ENCODE measurements at regions of chr11 and their contacts with region 1.

Region 1: DNA sequence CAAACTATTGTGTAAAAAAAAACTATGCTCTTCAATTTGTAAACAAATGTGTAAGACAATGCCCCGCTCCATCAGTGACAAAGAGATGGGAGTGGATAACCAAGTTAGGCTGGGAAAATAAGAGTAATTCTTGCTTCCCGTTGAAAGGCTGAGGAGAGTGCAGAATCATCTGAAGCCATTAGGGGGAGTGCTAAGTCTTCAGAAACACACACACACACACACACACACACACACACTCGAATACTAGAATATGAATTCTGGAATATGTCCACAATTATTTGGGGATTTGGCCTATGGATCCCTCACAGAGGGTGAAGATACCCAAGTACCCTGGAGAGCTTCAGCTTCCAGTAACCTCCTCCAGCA is 27.8 kb upstream of the ROBO3 start:
- DNase-seq: peak; percentile 87
- H3K4me3 ChIP-seq: no peak overlapping the region
- H3K27ac ChIP-seq: no peak overlapping the region
- H3K4me1 ChIP-seq: peaks cover 10% of the 10 kb centered on the region
- H3K27me3 ChIP-seq: peaks cover 37 to 53% of the 10 kb centered on the region in 2 experiments
- CTCF ChIP-seq: peak; percentile 55 to 69
- POLR2A ChIP-seq: no peak

Region 2: DNA sequence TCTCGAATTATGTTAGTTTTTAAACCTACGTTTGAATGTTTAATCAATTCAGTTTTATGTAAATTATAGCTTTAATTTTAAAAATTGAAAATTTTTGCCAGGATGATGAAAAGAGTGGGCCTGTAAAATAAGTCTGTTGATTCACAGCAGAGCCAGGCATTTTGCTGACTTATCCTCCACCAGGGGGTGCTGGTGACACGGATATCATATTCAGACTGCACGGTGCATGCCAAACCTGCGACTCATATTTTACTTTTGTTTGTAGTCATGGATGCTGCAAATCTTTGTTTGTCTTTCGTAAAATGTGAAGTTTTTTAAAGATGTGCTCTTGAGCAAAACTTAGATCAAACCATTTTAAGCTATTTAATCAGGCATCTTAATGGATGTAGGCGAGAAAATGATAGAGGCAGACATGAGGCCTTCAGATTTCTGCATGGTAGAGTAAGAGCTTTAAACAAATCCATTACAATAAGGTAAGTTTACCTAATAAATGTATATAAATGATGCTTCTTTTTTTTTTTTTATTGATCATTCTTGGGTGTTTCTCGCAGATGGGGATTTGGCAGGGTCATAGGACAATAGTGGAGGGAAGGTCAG is 435.1 kb before region 1 on chr11:
- CTCF ChIA-PET with region 1: interaction called, 3 read pairs
- POLR2A ChIA-PET with region 1: no interaction called
- dilution Hi-C with region 1: no loop called
- intact Hi-C with region 1: loop called (anchors 5 kb)
- DNase-seq: peak; percentile 67
- H3K4me3 ChIP-seq: no peak overlapping the region
- H3K27ac ChIP-seq: no peak overlapping the region
- H3K4me1 ChIP-seq: no peaks in the 10 kb centered on the region
- H3K27me3 ChIP-seq: peaks cover 2 to 10% of the 10 kb centered on the region in 2 experiments
- CTCF ChIP-seq: peak; percentile 80
- POLR2A ChIP-seq: no peak

Region 3: GRCh38 chr11:124662106-124662505 is 175.4 kb before region 1 on chr11:
- CTCF ChIA-PET with region 1: interaction called, 21 read pairs
- POLR2A ChIA-PET with region 1: no interaction called
- dilution Hi-C with region 1: loop called (anchors 10 kb)
- intact Hi-C with region 1: no loop called
- DNase-seq: no peak
- H3K4me3 ChIP-seq: no peak overlapping the region
- H3K27ac ChIP-seq: no peak overlapping the region
- H3K4me1 ChIP-seq: no peaks in the 10 kb centered on the region
- H3K27me3 ChIP-seq: no peaks in the 10 kb centered on the region
- CTCF ChIP-seq: no peak
- POLR2A ChIP-seq: no peak

Region 4: GRCh38 chr11:124746621-124747243 is 90.7 kb before region 1 on chr11:
- CTCF ChIA-PET with region 1: interaction called, 29 read pairs
- POLR2A ChIA-PET with region 1: no interaction called
- dilution Hi-C with region 1: no loop called
- intact Hi-C with region 1: loop called (anchors 1 kb)
- DNase-seq: peak; percentile 93
- H3K4me3 ChIP-seq: peak overlapping the region in 2 of 3 experiments; percentile 36 to 46
- H3K27ac ChIP-seq: peak overlapping the region; percentile 70
- H3K4me1 ChIP-seq: peaks cover 40% of the 10 kb centered on the region
- H3K27me3 ChIP-seq: no peaks in the 10 kb centered on the region
- CTCF ChIP-seq: peak; percentile 62 to 79
- POLR2A ChIP-seq: peak; percentile 72

Region 5: DNA sequence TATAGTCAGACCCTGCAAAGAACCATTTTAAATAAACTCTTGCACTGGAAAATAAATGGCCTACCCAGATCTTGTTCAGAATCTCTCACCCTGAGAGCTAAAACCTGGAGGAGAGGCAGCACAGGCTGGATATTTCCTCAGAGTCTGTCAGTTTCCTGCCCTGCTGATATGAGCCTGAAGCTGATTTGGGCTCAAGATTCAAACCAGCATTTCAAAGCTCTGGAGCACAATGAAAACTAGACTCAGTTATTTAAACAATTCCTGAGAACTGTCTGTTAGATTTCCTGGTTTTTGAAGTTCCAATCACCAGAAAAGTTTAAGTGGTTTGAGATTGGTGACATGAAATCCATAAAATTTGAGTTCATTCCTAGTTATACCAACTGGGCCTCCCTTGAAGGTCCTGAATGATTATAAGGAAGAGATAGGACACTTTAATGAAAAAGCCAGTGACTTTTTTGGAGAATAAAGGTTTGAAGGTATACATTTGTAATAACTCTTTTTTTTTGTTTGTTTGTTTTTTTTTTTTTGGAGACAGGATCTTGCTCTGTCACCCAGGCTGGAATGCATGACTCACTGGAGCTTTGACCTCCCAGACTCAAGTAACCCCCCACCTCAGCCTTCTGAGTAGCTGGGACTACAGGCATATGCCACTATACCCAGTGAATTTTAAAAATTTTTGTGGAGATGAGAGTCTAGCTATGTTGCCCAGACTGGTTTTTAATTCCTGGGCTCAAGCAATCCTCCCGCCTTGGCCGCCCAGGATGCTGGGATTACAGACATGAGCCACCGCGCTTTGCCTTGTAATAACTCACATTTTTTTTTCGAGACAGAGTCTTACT is 67.5 kb before region 1 on chr11:
- CTCF ChIA-PET with region 1: interaction called, 84 read pairs
- POLR2A ChIA-PET with region 1: interaction called, 3 read pairs
- dilution Hi-C with region 1: no loop called
- intact Hi-C with region 1: no loop called
- DNase-seq: peak; percentile 72
- H3K4me3 ChIP-seq: no peak overlapping the region
- H3K27ac ChIP-seq: peak overlapping the region; percentile 86
- H3K4me1 ChIP-seq: peaks cover 34% of the 10 kb centered on the region
- H3K27me3 ChIP-seq: no peaks in the 10 kb centered on the region
- CTCF ChIP-seq: no peak
- POLR2A ChIP-seq: peak; percentile 41

Region 6: GRCh38 chr11:124812876-124813275 is 24.6 kb before region 1 on chr11:
- CTCF ChIA-PET with region 1: interaction called, 40 read pairs
- POLR2A ChIA-PET with region 1: no interaction called
- dilution Hi-C with region 1: no loop called
- intact Hi-C with region 1: no loop called
- DNase-seq: peak; percentile 55
- H3K4me3 ChIP-seq: no peak overlapping the region
- H3K27ac ChIP-seq: no peak overlapping the region
- H3K4me1 ChIP-seq: peaks cover 13% of the 10 kb centered on the region
- H3K27me3 ChIP-seq: peaks cover 0 to 4% of the 10 kb centered on the region in 2 experiments
- CTCF ChIP-seq: no peak
- POLR2A ChIP-seq: no peak

Region 7: DNA sequence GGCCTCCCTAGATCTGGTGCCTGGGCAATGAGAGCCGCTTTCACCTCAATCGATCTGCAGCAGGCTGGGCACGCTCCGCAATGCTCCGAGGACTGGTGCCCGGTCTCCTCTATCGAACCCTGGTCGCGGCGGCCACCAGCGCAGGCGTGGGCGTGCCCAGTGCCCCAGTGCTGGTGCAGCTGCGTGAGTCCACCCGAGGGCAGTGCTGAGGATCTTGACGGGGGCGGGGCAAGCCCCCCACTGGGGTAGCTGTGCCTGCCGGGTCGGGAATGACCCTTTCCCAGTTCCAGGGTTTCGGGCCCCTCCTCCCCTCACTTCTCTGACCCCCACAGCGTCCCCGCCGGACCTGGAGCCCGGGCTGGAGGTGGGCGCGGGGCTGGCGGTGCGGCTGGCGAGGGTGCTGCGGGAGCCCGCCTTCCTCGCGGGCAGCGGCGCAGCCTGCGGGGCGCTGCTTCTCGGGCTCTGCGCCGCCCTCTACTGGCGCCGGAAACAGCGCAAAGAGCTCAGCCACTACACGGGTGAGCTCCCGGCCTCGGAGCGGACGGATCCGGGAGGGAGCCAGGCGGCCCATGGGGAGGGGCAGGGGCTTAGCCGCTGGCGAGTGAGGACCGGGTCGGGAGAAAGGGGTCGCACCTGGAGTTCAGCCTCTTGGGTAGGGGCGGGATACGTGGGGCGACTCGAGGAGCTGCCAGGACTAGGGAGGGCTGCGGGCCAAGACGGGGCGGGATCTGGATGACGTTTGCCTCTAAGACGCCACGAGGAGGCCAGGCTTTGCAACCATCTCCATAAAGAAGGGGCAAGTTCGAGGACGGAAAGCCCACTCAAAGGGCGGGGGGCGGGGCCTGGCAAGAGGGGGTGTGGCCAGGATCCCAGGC is 38.7 kb after region 1 on chr11:
- CTCF ChIA-PET with region 1: interaction called, 14 read pairs
- POLR2A ChIA-PET with region 1: no interaction called
- dilution Hi-C with region 1: no loop called
- intact Hi-C with region 1: no loop called
- DNase-seq: peak; percentile 97
- H3K4me3 ChIP-seq: peak overlapping the region; percentile 14 to 49 (median 47)
- H3K27ac ChIP-seq: peak overlapping the region; percentile 65
- H3K4me1 ChIP-seq: peaks cover 21% of the 10 kb centered on the region
- H3K27me3 ChIP-seq: peaks cover 21 to 26% of the 10 kb centered on the region in 2 experiments
- CTCF ChIP-seq: peak; percentile 63 to 74
- POLR2A ChIP-seq: no peak